Posterior vena cava (tissue), 2 donors: ENCODE measurements at regions of chr17 and their contacts with region 1.

Region 1: DNA sequence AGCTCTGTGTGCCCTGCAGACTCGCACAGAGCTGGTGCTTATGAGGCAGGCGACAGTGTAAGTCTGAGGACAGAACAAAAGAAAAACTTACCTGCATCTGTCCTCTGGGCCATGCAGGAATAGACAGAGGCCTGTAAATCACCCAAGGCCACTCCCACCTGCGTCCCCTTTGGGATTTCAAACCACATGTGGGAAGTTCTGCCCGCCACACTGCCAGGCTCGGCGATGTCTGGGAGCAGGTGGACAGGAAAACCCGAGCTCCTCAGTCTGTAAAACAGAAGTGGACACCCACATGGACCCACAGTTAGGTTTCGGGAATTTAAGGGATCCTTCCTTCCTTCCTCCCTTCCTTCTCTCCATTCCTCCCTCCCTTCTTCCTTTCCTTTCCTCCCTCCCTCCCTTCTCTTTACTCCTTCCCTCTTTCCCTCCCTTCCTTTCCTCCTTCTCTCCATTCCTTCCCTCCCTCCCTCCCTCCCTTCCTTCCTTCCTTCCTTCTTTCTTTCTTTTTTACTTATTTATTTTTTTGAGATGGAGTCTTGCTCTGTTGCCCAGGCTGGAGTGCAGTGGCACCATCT is 12.0 kb upstream of the TRPV1 start:
- DNase-seq: no peak

Region 2: DNA sequence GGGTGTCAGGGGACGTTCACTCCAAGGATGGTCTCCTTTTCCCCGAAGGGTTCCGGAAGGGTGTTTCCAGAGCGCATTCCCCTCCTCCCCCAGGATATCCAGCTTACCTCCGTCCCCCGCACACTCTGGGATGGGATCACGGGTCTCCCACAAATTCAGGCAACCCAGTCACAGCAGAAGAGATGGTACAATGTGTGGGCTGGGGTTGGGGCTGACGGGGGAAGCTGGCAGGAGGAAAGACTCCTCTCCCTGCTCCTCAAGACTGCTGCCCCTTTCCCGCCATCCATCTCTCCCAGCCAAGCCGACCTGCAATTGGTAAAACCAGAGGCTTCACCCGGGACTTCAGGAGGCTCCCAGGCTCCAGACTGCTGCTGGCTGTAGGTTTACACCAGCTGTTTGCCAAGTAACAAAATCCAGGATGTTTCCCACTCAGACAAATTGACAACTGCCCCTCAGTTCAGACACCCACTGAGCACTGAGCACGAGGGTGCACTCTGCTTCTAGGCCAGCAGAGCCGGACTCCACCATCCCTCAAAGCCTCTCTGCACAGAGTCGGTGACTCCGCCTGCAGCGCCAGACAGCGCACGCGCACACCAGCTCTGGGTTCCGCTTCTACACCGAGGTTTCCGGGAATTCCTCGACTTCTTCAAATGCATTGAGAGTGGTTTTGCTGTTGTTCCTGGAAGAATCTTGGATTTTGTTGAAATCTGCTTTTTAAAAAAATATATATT is 107.8 kb before region 1 on chr17:
- intact Hi-C with region 1: no loop called
- DNase-seq: no peak

Region 3: DNA sequence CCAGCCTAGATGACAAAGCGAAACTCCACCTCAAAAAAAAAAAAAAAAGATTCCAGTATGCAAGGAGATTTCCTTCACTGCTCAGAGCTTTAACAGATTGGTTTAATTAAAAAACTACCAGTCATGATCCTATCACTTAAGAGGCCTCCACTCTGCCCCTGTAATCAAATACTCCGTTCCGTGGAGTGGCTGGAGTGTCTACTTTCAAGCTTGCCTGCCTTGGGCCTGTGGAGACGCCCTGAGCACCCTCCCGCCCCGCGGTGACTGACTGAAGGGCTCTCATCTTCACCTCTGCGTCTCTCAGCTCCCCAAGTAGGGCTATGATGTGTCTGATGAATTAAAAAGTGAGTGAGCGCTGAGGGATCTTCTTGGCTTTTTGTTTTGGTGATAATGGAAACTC is 38.3 kb before region 1 on chr17:
- intact Hi-C with region 1: loop called in 1 of 2 experiments (anchors 1 kb)
- DNase-seq: no peak

Region 4: GRCh38 chr17:3668279-3669085 is 47.2 kb after region 1 on chr17 and contains the starts of genes EMC6 and TAX1BP3:
- intact Hi-C with region 1: no loop called
- DNase-seq: peak; percentile 100
- total RNA-seq, gene EMC6: 23.7 to 24.7 TPM
- total RNA-seq, gene TAX1BP3: 106 to 126 TPM